Left ventricle myocardium superior (tissue), 1 donor: ENCODE measurements at regions of chr4 and their contacts with region 1.

Region 1: DNA sequence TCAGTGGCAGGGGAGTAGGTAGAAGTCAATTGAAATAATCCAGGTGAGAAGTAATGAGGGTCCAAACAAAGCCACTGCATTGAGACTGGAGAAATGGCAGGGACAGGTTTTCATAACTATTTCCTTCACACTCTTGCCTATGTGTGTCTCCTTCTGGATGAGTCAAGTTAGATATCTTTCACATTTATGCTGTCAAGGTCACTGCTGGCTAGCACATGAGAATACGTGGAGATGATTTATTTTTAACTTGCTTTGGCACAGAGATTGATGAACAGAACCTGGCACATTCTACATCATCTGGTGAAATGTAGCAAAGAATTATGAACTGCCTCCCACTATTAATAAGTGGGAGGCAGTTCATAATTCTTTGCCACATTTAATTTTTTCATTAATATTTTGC is 66.7 kb upstream of the BOD1L1 start:
- DNase-seq: no peak
- ATAC-seq: peak; percentile 96

Region 2: DNA sequence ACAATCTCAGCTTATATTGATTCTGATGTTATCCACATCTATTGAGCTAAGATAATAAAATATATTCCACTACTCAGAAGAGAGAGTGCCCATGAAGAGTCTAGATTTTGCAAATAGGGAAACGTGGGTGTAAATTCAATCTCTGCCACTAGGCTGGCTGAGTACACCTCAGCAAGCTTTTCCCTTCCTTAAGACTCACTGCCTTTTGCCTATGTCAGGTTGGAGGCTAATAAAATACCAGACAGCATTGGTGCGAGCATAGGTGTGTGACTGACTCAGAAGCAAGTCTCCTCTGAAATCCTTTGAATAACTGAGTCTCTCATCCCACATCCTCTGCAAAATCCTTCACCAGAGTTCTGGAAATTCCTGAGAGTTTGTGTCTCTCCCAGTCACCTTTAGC is 902.6 kb after region 1 on chr4:
- intact Hi-C with region 1: loop called (anchors 5 kb)
- DNase-seq: no peak
- ATAC-seq: no peak